AG04449 (cell line): ENCODE measurements at regions of chr7 and their contacts with region 1.

Region 1: DNA sequence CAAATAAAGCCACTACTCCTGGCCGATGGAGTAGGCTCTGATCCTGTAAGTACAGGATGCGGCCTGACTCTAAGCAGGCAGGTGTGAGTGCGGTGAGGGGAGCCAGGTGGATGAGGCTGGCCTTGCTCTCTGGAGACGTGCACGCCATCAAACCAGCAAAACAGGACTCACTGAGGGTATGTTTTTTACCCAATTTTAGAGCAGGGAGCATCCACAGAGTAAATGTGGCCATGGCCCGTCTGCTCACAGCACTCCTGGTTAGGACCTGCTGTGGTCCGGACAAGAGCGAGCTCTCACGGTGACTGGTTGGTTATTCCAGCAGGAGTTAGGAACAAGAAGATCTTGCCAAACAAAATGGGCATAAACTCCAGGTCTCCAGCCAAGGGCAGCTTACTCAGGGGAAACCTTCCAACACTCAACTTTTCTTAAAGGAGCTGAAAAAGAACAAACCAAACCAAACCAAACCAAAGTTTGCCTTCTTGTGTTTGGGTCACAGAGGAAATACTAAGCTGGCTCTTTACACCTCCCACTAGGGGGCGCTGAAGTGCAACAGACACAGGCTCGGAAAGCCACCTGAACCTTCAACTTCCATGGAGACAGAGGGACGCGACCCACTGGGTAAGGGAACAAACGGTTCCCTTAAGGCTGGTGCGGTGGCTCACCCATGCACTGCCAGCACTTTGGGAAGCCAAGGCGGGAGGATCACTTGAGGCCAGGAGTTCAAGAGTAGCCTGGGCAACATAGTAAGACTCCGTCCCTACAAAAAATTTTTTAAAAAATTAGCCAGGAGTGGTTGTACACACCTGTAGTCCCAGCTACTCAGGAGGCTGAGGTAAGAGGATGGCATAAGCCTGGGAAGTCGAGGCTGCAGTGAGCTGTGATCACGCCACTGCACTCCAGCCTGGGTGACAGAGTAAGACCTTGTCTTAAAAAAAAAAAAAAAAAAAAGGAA is 122.4 kb downstream of the CLEC2L start:
- DNase-seq: no peak
- H3K4me3 ChIP-seq: no peak overlapping the region
- CTCF ChIP-seq: peak; percentile 83

Region 2: GRCh38 chr7:139075031-139075652 is 570.7 kb before region 1 on chr7:
- CTCF ChIA-PET with region 1: no interaction called
- POLR2A ChIA-PET with region 1: no interaction called
- DNase-seq: peak; percentile 31
- H3K4me3 ChIP-seq: no peak overlapping the region
- CTCF ChIP-seq: peak; percentile 55

Region 3: GRCh38 chr7:139626817-139627216 is 19.0 kb before region 1 on chr7:
- CTCF ChIA-PET with region 1: interaction called, 35 read pairs
- POLR2A ChIA-PET with region 1: no interaction called
- DNase-seq: no peak
- H3K4me3 ChIP-seq: no peak overlapping the region
- CTCF ChIP-seq: no peak

Region 4: DNA sequence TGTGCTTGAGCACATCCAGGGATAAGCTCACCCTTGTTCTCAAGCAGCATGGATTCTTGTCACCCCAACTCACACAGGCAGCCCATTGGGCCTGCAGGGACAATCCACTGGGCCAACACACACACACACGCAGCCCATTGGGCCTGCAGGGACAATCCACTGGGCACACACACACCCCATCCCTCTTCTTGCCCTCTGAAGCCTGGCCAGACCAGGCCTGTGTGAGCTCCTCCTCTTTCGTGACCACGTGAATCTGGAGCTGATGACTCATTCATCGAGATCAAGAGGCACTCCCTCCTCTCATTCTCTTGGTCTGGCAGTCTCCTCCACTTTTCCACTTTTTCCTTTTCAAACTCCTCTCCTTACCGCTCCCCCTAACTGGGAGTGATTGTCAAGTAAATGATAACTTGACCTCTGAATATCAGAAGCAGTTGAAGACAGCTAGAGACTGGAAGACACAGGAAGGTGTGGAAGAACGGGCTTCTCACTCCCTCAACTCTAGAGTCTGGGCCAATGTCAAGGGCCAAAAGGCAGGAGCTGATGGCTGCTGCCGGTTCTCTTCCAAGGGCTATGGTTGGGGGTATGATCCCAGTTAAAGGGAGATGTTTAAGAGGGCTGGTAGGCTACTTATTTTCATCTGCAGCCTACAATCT is 42.3 kb after region 1 on chr7:
- CTCF ChIA-PET with region 1: interaction called, 17 read pairs
- POLR2A ChIA-PET with region 1: interaction called, 3 read pairs
- DNase-seq: no peak
- H3K4me3 ChIP-seq: no peak overlapping the region
- CTCF ChIP-seq: no peak

Region 5: DNA sequence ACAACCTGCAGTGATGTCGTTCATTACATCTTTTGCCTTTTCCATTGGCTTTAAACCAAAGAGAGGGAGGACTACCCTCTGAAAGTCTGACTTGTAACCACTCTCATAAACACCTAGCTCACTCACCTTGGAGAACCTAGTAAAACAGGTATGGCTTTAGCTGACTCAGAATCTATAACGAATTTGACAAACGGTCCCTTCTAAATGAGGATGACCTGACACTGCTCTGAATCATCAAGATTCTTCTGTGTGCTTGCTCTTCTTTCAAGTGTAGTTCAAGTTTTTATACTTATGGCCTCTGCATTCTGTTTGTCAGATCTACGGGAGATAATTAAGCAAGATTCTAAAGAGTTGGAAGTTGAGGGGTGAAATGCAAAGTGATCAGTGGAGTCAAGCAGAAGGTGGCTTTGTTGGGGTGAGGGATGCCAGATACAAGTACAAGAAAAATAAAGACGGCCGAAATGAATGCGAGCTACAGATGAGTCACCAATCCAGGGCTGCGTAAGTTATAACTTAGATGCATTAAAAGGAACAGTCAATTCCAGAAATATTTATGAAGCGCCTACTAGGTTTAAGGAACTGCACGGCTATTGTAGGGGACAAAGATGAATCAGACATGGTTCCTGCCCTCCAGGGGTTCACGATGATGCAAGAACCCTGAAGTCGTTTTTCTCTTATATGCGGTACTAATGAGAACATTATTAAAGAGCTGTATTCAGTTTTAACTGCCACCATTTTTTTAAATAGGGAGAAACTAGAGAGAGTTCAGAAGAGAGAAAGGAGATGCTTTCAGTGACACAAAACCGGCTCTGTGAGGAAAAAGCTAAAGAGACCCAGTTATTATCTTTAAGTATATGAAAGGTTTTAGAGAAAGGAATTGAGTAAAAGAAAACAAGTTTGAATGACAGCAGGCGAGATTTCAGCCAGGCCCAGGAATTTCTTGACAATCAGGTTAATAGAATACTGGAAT is 125.4 kb after region 1 on chr7:
- CTCF ChIA-PET with region 1: interaction called, 38 read pairs
- POLR2A ChIA-PET with region 1: interaction called, 3 read pairs
- DNase-seq: peak; percentile 80
- H3K4me3 ChIP-seq: peak overlapping the region; percentile 24
- CTCF ChIP-seq: no peak

Region 6: GRCh38 chr7:139889186-139889871 is 243.5 kb after region 1 on chr7:
- CTCF ChIA-PET with region 1: no interaction called
- POLR2A ChIA-PET with region 1: no interaction called
- DNase-seq: no peak
- H3K4me3 ChIP-seq: no peak overlapping the region
- CTCF ChIP-seq: no peak

Region 7: DNA sequence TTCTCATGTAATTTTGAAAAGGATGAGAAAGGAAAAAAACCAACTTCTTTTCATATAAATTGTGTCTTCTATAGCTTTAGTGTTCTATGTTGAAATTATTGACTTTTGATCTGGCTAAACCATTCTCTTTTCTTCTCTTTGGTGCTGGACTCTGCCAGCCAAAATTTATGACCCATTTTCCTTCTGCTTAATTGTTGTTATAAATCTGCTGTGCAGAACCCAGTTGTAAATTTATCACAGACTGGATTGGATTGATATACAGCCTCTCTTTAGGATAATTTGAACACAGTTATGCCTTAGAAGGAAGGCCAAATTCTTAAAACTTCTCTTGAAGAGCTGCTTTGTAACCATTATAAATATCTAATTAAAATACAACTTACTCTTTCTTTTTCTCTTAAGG is 323.1 kb after region 1 on chr7:
- CTCF ChIA-PET with region 1: interaction called, 10 read pairs
- POLR2A ChIA-PET with region 1: no interaction called
- DNase-seq: no peak
- H3K4me3 ChIP-seq: no peak overlapping the region
- CTCF ChIP-seq: no peak

Region 8: DNA sequence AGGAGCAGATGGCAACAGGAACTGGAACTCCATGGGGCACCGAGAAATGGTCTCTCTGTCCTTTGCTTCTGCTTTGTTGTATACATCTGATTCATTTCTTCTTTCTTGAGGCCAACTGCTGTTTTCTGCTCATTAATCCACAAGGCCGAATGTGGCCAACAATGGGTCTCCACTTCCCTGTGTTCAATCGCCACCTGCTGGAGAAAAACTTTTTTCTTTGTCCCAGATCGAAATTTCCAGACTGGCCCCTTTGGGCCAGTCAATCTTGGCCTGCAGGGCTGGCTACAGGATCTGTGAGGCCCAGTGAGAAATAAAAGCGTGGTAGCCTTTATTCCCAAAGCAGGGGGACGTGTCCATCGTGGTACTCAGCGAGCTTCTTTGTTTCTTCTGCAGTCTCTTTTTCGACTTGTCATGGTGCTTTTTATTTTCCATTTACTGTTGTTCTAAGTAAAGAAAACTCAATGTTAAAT is 358.1 kb after region 1 on chr7:
- CTCF ChIA-PET with region 1: interaction called, 192 read pairs
- POLR2A ChIA-PET with region 1: no interaction called
- DNase-seq: no peak
- H3K4me3 ChIP-seq: no peak overlapping the region
- CTCF ChIP-seq: peak; percentile 42